ENCODE measurements at regions of chr3 and their contacts with region 1.

Region 1: DNA sequence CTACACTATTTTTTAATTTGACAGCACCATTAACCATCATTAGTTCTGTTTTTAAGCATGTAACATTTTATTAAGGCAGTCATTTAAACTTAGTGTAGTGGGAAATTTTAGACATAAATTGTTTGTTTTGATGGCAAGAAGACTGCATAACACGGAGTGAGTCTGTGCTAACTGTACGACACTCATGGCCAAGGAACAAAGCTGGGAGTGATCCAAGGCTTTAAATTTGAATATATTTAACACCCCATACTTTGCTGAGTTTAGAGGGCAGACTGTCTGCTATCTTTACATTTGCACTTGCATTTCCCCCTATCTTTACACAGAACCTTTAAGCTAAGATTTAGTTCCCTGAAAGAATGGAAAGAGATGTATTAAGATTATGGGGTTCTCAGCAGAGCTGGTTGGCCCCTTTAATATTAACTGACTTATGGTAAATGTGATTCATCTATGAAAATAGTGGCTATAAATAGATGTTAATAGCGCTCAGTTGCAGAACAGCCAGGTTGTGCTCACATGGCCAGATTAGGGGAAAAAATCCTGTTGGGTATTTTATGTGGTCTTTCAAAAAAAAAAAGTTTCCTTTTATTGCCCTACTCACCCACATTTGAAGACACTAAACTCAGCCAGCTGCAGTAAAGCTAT is 120.7 kb downstream of the CMSS1 start:
- DNase-seq: peak; percentile 54
- ATAC-seq: no peak; the same call in 1 of the 2 replicates
- H3K4me3 ChIP-seq: no peak overlapping the region
- H3K27ac ChIP-seq: peak overlapping the region; percentile 3; the same call in 1 of the 2 replicates
- H3K4me1 ChIP-seq: peaks cover 14% of the 10 kb centered on the region
- H3K27me3 ChIP-seq: no peaks in the 10 kb centered on the region
- CTCF ChIP-seq: no peak
- POLR2A ChIP-seq: no peak
- RAD21 ChIP-seq: no peak

Region 2: GRCh38 chr3:99607151-99607550 is 331.2 kb before region 1 on chr3:
- CTCF ChIA-PET with region 1: no interaction called
- POLR2A ChIA-PET with region 1: no interaction called
- dilution Hi-C with region 1: no loop called
- in situ Hi-C with region 1: no loop called
- intact Hi-C with region 1: no loop called
- DNase-seq: no peak
- ATAC-seq: no peak
- H3K4me3 ChIP-seq: no peak overlapping the region
- H3K27ac ChIP-seq: no peak overlapping the region
- H3K4me1 ChIP-seq: no peaks in the 10 kb centered on the region
- H3K27me3 ChIP-seq: no peaks in the 10 kb centered on the region; the same call in 1 of the 2 replicates
- CTCF ChIP-seq: no peak
- POLR2A ChIP-seq: no peak
- RAD21 ChIP-seq: no peak

Region 3: DNA sequence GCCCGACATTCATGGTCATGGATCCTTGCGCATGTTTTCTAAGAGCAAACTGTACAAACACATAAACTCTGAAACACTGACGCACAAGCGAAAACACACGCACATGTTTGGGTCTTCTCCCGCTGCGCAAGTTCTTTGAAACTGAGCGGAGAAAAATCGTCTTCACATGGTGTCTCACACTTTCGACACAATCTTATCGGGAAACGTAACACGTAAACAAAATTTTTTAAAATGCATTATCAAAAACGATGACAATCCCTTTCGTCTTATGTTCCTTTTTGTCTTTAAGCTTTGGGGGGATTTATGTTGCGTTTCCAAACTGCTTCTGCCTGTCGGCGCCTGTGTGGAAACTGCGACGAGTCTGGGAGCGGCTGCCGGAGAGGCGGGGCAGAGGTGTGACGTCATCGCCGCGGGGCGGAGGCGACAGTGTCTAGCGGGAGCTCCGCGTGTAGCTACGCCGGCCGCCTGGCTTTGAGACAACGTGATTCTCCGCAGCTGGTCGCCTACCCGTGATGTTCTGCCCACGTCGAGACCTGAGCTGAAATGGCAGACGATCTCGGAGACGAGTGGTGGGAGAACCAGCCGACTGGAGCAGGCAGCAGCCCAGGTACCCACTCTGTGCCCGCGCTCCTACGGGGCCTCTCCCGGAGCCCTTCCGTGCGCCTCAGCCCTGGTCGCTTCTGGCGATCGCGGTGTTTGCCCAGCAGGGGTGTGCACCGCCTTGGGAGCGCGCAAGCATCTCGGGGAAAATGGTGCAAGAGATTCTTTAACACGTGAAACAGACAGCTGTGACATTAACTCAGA is 120.8 kb before region 1 on chr3 and contains the start of gene CMSS1:
- CTCF ChIA-PET with region 1: no interaction called
- POLR2A ChIA-PET with region 1: interaction called, 11 read pairs
- dilution Hi-C with region 1: no loop called
- in situ Hi-C with region 1: no loop called
- intact Hi-C with region 1: no loop called
- DNase-seq: peak; percentile 90
- ATAC-seq: peak; percentile 96
- H3K4me3 ChIP-seq: peak within 1 kb of the TSS; percentile 92
- H3K27ac ChIP-seq: peak within 1 kb of the TSS; percentile 94
- H3K4me1 ChIP-seq: peaks cover 2% of the 10 kb centered on the region
- H3K27me3 ChIP-seq: no peaks in the 10 kb centered on the region
- CTCF ChIP-seq: peak; percentile 22; the same call in 1 of the 2 replicates
- POLR2A ChIP-seq: peak; percentile 88
- RAD21 ChIP-seq: 0 out of 2 replicates have a peak, but pooled peaks have one; percentile 4
- total RNA-seq, gene CMSS1: 13.6 and 18.1 TPM in 2 replicates

Region 4: GRCh38 chr3:100125161-100125938 is 187.0 kb after region 1 on chr3:
- CTCF ChIA-PET with region 1: no interaction called
- POLR2A ChIA-PET with region 1: interaction called, 14 read pairs
- dilution Hi-C with region 1: no loop called
- in situ Hi-C with region 1: no loop called
- intact Hi-C with region 1: no loop called
- DNase-seq: peak; percentile 28
- ATAC-seq: no peak; the same call in 1 of the 2 replicates
- H3K4me3 ChIP-seq: no peak overlapping the region
- H3K27ac ChIP-seq: no peak overlapping the region
- H3K4me1 ChIP-seq: peaks cover 4% of the 10 kb centered on the region; the same call in 1 of the 2 replicates
- H3K27me3 ChIP-seq: no peaks in the 10 kb centered on the region
- CTCF ChIP-seq: no peak
- POLR2A ChIP-seq: no peak
- RAD21 ChIP-seq: no peak